ENCODE measurements at regions of chr5 and their contacts with region 1.

Region 1: DNA sequence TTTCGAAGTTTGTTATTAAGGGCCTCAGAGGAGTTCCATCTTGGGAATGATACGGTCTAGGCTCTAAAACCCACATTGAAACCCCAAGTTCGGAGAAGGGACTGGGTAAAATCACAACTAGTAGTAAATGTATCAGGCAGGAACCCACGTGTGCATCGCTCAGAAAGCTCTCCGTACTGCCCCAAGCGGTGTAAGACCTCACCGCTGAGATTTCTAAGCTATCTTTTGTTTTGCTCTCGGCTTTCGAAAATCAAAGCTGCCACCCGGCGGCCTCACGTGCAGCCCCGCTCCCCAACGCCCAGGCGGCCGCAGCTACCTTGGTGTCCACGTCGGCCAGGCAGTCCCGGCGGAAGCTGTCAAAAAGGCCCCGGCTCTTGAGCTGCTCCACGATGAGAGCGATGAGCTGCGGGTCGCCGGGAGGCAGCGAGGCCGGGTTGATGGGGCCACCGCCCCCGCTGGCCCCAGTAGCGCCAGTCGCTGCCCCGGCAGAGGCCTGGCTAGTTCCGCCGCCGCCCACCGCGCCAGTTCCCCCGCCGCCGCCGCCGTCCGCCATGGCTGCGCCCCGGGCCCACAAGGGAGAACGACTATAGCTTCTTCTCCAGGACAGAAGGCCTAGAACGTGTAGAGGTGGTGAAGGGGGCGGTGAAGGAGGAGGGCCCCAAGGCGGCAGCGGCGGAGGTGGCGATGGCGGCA is 420 bp downstream of the BOD1 start:
- DNase-seq: peak; percentile 57
- ATAC-seq: peak; percentile 75
- H3K4me3 ChIP-seq: peak overlapping the region; percentile 66 to 93
- H3K27ac ChIP-seq: peak overlapping the region; percentile 89
- H3K4me1 ChIP-seq: peaks cover 27% of the 10 kb centered on the region
- H3K27me3 ChIP-seq: no peaks in the 10 kb centered on the region
- CTCF ChIP-seq: peak; percentile 79

Region 2: GRCh38 chr5:172833686-172834414 is 782.2 kb before region 1 on chr5 and contains the start of gene ERGIC1:
- CTCF ChIA-PET with region 1: no interaction called
- POLR2A ChIA-PET with region 1: no interaction called
- in situ Hi-C with region 1: no loop called
- intact Hi-C with region 1: no loop called
- DNase-seq: no peak
- ATAC-seq: peak; percentile 94
- H3K4me3 ChIP-seq: peak within 1 kb of the TSS; percentile 73 to 82
- H3K27ac ChIP-seq: peak within 1 kb of the TSS; percentile 90
- H3K4me1 ChIP-seq: peaks cover 55% of the 10 kb centered on the region
- H3K27me3 ChIP-seq: no peaks in the 10 kb centered on the region
- CTCF ChIP-seq: no peak
- total RNA-seq, gene ERGIC1: 206 TPM

Region 3: GRCh38 chr5:173717959-173718358 is 101.9 kb after region 1 on chr5:
- CTCF ChIA-PET with region 1: interaction called, 13 read pairs
- POLR2A ChIA-PET with region 1: no interaction called
- in situ Hi-C with region 1: no loop called
- intact Hi-C with region 1: no loop called
- DNase-seq: no peak
- ATAC-seq: no peak
- H3K4me3 ChIP-seq: no peak overlapping the region
- H3K27ac ChIP-seq: no peak overlapping the region
- H3K4me1 ChIP-seq: no peaks in the 10 kb centered on the region
- H3K27me3 ChIP-seq: no peaks in the 10 kb centered on the region
- CTCF ChIP-seq: no peak

Region 4: GRCh38 chr5:173907686-173908371 is 291.8 kb after region 1 on chr5:
- CTCF ChIA-PET with region 1: no interaction called
- POLR2A ChIA-PET with region 1: interaction called, 21 read pairs
- in situ Hi-C with region 1: no loop called
- intact Hi-C with region 1: no loop called
- DNase-seq: no peak
- ATAC-seq: no peak
- H3K4me3 ChIP-seq: no peak overlapping the region
- H3K27ac ChIP-seq: no peak overlapping the region
- H3K4me1 ChIP-seq: no peaks in the 10 kb centered on the region
- H3K27me3 ChIP-seq: no peaks in the 10 kb centered on the region
- CTCF ChIP-seq: no peak

Region 5: DNA sequence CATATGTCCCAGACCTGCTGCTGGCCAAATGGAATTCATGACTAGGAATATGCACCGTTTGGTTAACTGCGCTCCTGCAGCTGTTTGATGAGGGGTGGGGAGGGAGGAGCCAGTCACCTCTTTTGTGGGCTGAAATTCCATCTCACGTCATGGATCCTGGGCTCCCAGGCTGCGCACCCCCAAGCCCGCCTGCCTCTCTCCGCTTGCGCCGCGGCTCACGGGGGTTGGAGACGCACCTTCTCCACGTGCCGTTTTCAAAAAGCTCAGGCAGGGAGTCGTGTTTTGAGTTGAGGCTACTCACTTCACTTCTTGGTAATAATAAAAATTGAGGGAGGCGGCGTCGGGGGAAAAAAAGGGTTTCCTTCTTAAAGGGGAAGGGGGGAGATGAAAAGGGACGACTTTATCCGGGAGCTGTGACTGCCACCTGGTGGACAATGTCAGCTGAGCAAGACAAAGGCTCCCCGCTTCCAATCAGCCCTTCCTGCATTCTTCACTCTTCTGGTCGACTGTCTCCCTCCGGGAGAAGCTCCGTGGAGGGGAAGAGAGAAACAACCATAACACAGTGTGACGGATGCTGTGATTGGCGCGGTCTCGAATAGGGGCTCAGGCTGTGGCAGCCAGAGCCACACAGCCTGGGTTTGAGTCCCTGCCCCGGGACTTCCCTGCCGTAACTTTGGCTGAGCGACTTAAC is 357.0 kb after region 1 on chr5:
- CTCF ChIA-PET with region 1: interaction called, 6 read pairs
- POLR2A ChIA-PET with region 1: no interaction called
- in situ Hi-C with region 1: no loop called
- intact Hi-C with region 1: loop called (anchors 2 kb)
- DNase-seq: peak; percentile 67
- ATAC-seq: peak; percentile 75
- H3K4me3 ChIP-seq: peak overlapping the region; percentile 32 to 59
- H3K27ac ChIP-seq: 0 out of 2 replicates have a peak overlapping the region, but pooled peaks have one; percentile 13
- H3K4me1 ChIP-seq: peaks cover 18% of the 10 kb centered on the region
- H3K27me3 ChIP-seq: no peaks in the 10 kb centered on the region
- CTCF ChIP-seq: peak; percentile 88

Region 6: DNA sequence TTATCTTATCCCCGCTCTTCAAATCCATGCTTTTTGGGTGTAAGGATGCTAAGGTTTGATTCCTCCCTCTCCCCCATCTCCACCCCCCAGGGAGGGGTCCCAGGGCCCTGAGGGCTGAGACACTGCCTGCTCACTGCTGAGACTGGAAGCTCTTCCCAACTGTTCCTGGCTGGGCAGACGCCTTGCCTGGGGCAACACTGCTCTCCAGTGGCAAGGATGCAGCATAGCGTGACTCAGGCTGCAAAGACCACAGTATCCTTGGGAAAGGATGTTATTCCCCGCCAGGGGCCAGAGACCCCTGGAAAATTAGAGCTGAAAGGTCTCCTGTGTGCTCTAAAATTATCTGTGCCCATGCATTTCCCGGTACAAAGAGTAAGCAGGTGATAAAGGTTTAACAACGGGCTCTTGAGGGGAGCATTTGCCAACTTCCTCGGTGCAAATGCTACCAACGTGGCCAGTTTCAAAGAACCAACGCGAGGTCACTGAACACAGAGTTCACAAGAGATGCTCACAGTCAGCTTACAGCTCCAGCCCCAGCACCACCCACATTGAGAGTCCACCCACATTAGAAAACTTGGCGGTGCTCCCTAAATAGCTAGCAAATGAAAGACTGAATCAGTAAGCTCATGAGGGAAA is 701.3 kb after region 1 on chr5:
- CTCF ChIA-PET with region 1: interaction called, 3 read pairs
- POLR2A ChIA-PET with region 1: no interaction called
- in situ Hi-C with region 1: no loop called
- intact Hi-C with region 1: loop called (anchors 1 kb)
- DNase-seq: peak; percentile 51
- ATAC-seq: peak; percentile 95
- H3K4me3 ChIP-seq: no peak overlapping the region
- H3K27ac ChIP-seq: no peak overlapping the region
- H3K4me1 ChIP-seq: no peaks in the 10 kb centered on the region
- H3K27me3 ChIP-seq: peaks cover 28% of the 10 kb centered on the region
- CTCF ChIP-seq: peak; percentile 90

Measured in Panc1 (cell line).